ENCODE measurements at regions of chr1 and their contacts with region 1.

Region 1: DNA sequence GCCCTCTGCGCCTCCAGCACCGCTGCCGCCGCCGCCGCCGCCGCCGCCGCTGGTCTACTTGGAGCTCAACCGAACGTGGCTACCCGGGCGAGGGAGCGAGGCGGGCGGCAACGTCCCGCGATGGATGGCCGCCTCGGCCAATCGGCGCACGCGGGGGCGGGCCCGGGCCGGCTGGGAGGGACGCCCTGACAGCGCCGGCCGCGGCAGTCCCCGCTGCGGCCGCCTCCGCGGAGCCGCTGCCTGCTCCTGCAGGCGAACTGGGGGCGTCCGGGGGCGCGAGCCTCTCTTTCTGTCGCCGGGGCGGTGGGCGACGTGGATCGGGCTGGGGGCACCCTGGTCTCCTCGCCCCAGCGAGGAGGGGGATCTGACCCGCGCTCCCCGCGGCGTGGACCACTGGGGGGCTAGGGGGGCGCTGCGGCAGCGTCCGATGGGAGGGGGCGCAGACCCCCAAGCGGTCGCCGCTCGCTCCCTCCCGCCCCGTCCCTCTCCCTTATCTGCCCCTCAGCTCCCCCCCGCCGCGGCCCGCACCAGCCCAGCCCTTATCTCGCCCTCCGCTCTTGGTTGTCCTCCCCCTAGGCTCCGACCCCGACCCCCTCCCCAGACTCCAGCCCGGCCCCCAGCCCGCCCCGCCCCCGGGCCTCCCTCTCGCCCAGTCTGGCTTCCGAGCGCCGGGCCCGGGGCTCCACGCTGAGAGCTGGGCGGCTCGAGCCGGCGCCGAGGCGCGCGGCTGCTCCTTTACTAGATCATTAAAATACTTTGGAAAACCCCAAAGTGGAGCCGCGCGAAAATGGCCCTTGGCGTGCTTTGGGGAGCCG is at the start of gene SSBP3:
- DNase-seq: peak; percentile 95
- ATAC-seq: peak; percentile 84
- H3K4me3 Mint-ChIP-seq: peak within 1 kb of the TSS; percentile 76
- H3K27ac Mint-ChIP-seq: peak within 1 kb of the TSS; percentile 88
- H3K4me1 Mint-ChIP-seq: peaks cover 57% of the 10 kb centered on the region
- H3K27me3 Mint-ChIP-seq: no peaks in the 10 kb centered on the region
- total RNA-seq, gene SSBP3: 40.3 to 64.2 TPM

Region 2: DNA sequence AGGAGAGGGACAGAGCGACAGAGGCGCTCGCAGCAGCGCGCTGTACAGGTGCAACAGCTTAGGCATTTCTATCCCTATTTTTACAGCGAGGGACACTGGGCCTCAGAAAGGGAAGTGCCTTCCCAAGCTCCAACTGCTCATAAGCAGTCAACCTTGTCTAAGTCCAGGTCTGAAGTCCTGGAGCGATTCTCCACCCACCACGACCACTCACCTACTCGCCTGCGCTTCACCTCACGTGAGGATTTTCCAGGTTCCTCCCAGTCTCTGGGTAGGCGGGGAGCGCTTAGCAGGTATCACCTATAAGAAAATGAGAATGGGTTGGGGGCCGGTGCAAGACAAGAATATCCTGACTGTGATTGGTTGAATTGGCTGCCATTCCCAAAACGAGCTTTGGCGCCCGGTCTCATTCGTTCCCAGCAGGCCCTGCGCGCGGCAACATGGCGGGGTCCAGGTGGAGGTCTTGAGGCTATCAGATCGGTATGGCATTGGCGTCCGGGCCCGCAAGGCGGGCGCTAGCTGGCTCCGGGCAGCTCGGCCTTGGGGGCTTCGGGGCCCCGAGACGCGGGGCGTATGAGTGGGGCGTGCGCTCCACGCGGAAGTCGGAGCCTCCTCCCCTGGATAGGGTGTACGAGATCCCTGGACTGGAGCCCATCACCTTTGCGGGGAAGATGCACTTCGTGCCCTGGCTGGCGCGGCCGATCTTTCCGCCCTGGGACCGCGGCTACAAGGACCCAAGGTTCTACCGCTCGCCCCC is 206.6 kb before region 1 on chr1 and contains the starts of genes CYB5RL and MRPL37:
- CTCF ChIA-PET with region 1: interaction called, 3 read pairs
- POLR2A ChIA-PET with region 1: interaction called, 5 read pairs
- intact Hi-C with region 1: loop called (anchors 1 to 2 kb)
- DNase-seq: peak; percentile 94
- ATAC-seq: peak; percentile 99
- H3K4me3 Mint-ChIP-seq: peak within 1 kb of the TSS; percentile 83
- H3K27ac Mint-ChIP-seq: peak within 1 kb of the TSS; percentile 84
- H3K4me1 Mint-ChIP-seq: peaks cover 30% of the 10 kb centered on the region
- H3K27me3 Mint-ChIP-seq: no peaks in the 10 kb centered on the region
- total RNA-seq, gene CYB5RL: 13.1 to 13.5 TPM
- total RNA-seq, gene MRPL37: 177 to 189 TPM

Region 3: GRCh38 chr1:54287176-54287650 is 119.3 kb before region 1 on chr1:
- CTCF ChIA-PET with region 1: interaction called, 4 read pairs
- POLR2A ChIA-PET with region 1: no interaction called
- intact Hi-C with region 1: loop called (anchors 1 to 5 kb)
- DNase-seq: peak; percentile 90
- ATAC-seq: peak; percentile 88
- H3K4me3 Mint-ChIP-seq: peak overlapping the region; percentile 59
- H3K27ac Mint-ChIP-seq: peak overlapping the region; percentile 97
- H3K4me1 Mint-ChIP-seq: peaks cover 94% of the 10 kb centered on the region
- H3K27me3 Mint-ChIP-seq: no peaks in the 10 kb centered on the region

Region 4: DNA sequence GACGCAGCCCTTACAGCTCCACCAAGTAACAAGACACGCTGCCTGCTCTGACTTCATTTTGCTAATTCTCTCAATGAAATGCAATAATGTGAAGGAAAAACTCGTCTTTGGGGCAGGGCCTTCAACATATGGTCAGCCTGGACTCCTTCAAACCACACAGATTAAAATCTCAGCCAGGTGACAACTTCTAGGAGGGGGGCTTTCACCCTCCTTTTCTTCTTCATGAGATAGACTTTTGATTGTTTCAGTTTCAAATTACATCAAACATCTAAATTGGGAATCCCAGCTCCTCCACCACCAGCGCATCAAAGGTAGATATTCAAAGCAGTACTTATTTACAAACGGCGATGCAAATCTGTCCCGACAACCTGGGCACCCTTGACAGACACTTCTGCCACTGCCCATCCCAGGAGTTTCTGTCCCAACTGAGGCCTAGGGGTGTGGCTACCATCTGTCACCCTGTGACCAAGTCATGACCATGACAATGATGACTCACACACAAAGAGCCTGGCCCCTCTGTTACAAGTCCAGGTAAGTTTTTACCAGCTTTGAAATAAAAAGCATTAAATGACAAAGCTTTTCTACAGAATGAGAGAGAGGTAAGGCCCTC is 30.0 kb before region 1 on chr1:
- CTCF ChIA-PET with region 1: interaction called, 4 read pairs
- POLR2A ChIA-PET with region 1: interaction called, 3 read pairs
- intact Hi-C with region 1: loop called (anchors 1 to 5 kb)
- DNase-seq: peak; percentile 62
- ATAC-seq: peak; percentile 77
- H3K4me3 Mint-ChIP-seq: no peak overlapping the region
- H3K27ac Mint-ChIP-seq: peak overlapping the region; percentile 56
- H3K4me1 Mint-ChIP-seq: peaks cover 87% of the 10 kb centered on the region
- H3K27me3 Mint-ChIP-seq: no peaks in the 10 kb centered on the region

Measured in activated CD4-positive, alpha-beta T cell treated with anti-CD3 and anti-CD28 coated beads for 36 hours (primary cell).